ENCODE measurements at regions of chr19 and their contacts with region 1.

Region 1: DNA sequence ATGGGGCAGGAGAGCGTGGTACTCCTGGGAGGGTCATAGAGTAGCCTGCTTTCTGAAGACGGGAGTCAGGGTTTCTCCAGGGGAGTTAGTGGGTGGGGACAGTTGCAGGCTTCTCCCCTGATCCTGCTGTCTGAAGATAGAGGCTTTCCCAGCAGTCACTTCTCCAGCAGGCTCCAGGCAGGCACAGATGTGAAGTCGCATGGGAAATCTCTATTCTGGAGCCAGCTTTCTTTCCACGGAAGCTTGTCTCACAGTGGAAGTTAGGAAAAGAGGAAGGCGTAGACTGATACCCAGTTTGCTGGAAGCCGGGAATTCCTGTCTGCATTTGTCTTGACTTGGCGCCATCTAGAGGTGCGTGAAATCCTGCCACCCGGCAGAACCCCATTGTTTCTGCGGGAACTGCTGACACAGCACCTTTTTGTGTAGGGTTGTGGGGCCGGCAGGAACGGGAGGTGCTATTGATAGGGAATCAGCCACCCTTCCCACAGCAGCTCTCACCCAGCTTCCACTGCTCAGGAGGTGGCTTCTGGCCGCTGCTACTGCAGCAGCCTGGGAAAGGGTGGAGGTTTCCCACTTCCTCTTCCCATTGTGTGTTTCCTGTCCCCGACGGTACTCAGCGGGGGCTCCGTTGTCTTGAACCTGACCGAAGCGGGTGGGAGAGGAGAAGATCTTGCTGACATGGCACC is 28.5 kb upstream of the NPAS1 start:
- H3K4me3 ChIP-seq: no peak overlapping the region
- H3K27ac ChIP-seq: no peak overlapping the region
- H3K4me1 ChIP-seq: no peaks in the 10 kb centered on the region
- CTCF ChIP-seq: peak; percentile 84

Region 2: GRCh38 chr19:46717034-46717723 is 274.0 kb before region 1 on chr19 and contains the start of gene PRKD2:
- CTCF ChIA-PET with region 1: no interaction called
- POLR2A ChIA-PET with region 1: no interaction called
- H3K4me3 ChIP-seq: peak within 1 kb of the TSS; percentile 81
- H3K27ac ChIP-seq: peak within 1 kb of the TSS; percentile 74
- H3K4me1 ChIP-seq: peaks cover 15% of the 10 kb centered on the region
- CTCF ChIP-seq: no peak

Region 3: DNA sequence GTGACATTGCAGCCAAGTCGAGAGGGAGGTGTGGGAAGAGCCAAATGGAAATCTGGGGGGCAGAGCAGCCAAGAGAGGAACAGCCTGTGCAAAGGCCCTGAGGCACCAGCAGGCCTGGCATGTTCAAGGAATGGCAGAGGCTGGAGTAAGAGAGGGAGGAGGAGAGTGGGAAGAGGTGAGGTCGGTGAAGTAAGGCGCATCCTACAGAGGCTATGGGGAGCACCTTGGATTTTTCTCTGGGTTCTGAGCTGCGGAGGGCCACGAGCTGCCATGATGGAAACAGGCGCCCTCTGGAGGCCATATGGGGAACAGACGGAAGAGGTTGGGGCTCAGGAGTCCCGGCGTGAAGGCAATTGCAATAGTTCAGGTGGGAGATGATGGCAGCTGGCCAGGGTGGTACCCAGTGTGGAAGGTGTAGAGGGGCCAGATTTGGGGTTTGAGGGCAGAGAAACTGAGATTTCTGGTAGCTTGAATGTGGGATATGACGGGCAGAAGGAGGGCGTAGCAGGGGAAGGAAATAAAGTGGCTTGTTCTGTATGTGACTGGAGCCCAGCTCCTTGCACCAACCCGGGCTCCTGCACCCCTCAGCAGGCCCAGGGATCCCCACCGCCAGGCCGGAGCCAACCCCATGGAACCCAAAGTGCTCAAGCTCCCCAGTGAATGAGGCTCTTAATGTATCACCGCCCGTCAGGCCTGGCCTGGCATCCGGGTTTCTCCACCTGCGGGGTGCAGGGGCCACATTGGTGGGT is 224.4 kb before region 1 on chr19:
- CTCF ChIA-PET with region 1: interaction called, 19 read pairs
- POLR2A ChIA-PET with region 1: no interaction called
- H3K4me3 ChIP-seq: no peak overlapping the region
- H3K27ac ChIP-seq: no peak overlapping the region
- H3K4me1 ChIP-seq: peaks cover 12% of the 10 kb centered on the region
- CTCF ChIP-seq: peak; percentile 90

Region 4: GRCh38 chr19:46904114-46905060 is 86.7 kb before region 1 on chr19:
- CTCF ChIA-PET with region 1: interaction called, 13 read pairs
- POLR2A ChIA-PET with region 1: no interaction called
- H3K4me3 ChIP-seq: no peak overlapping the region
- H3K27ac ChIP-seq: 0 out of 2 replicates have a peak overlapping the region, but pooled peaks have one; percentile 0
- H3K4me1 ChIP-seq: peaks cover 54% of the 10 kb centered on the region
- CTCF ChIP-seq: no peak

Region 5: DNA sequence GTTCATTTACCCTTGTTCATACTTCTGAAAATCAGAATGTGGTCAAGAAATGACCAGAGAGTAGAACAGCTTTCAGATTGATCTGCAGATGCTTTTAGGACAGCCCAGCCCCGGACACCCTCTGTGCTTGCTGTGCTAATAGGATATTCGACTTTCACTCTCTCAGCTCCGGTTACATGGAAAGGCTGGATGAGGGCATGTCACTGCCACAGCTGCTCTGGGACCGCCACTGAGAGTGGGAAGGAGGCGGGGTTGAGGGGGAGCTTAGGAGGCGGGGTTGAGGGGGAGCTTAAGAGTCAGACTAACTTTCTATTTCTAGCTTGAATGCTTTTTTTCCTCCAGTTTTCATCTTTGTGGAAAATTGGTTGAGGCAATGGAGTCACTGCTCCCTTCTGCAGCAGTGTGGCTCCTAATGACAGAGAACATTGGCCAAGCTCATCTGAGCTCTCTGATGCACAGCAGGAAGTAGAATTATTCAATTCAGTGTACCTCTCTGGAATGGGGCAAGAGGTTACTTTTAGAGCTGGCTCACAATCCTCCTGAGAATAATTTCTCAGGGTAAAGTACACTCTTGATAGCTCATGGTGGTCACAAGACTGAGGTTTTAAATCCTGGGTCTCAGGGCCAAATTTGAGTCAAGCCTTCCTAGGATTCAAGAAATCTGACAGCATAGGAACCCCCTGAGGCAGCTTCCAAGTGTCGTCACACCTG is 46.1 kb before region 1 on chr19:
- CTCF ChIA-PET with region 1: interaction called, 20 read pairs
- POLR2A ChIA-PET with region 1: no interaction called
- H3K4me3 ChIP-seq: no peak overlapping the region
- H3K27ac ChIP-seq: peak overlapping the region; percentile 48
- H3K4me1 ChIP-seq: peaks cover 22% of the 10 kb centered on the region
- CTCF ChIP-seq: no peak

Region 6: DNA sequence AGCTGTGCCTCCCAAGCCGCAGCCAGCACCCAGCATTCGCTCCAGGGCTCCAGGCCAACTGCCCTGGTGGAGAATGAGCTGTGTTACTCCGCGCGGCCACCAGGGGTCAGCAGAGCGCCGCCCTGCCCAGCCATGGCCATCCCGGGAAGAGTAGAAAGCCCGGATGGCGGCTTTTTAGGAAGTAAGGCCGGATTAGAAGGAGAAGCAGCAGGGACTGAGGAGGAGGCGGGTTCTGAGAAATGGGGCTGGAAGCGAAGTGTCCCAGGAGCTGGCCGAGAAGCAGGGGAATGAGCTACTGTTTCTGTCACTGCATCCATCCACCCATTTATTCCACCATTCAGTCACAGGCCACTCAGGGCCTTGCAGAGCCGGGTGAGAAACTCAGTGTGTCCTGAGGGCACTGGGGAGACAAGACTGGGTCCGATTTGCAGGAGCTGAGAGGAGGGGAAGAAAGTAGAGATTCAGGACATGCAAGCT is 21.9 kb after region 1 on chr19:
- CTCF ChIA-PET with region 1: interaction called, 34 read pairs
- POLR2A ChIA-PET with region 1: no interaction called
- H3K4me3 ChIP-seq: no peak overlapping the region
- H3K27ac ChIP-seq: no peak overlapping the region
- H3K4me1 ChIP-seq: no peaks in the 10 kb centered on the region
- CTCF ChIP-seq: peak; percentile 95